ENCODE measurements at regions of chr17 and their contacts with region 1.

Region 1: GRCh38 chr17:68759343-68760132 is 158.4 kb upstream of the FAM20A start:
- DNase-seq: peak in 4 of 9 donors; percentile 10 to 39 (median 10)
- ATAC-seq: peak; percentile 85
- H3K4me3 ChIP-seq: no peak overlapping the region
- H3K4me3 Mint-ChIP-seq: peak overlapping the region in 1 of 10 donors; percentile 59
- H3K27ac ChIP-seq: no peak overlapping the region
- H3K27ac Mint-ChIP-seq: no peak overlapping the region
- H3K4me1 ChIP-seq: no peaks in the 10 kb centered on the region
- H3K4me1 Mint-ChIP-seq: peaks cover 0 to 17% (median 7%) of the 10 kb centered on the region in 7 donors
- H3K27me3 ChIP-seq: no peaks in the 10 kb centered on the region
- H3K27me3 Mint-ChIP-seq: peaks cover 0 to 14% (median 8%) of the 10 kb centered on the region in 5 donors

Region 2: DNA sequence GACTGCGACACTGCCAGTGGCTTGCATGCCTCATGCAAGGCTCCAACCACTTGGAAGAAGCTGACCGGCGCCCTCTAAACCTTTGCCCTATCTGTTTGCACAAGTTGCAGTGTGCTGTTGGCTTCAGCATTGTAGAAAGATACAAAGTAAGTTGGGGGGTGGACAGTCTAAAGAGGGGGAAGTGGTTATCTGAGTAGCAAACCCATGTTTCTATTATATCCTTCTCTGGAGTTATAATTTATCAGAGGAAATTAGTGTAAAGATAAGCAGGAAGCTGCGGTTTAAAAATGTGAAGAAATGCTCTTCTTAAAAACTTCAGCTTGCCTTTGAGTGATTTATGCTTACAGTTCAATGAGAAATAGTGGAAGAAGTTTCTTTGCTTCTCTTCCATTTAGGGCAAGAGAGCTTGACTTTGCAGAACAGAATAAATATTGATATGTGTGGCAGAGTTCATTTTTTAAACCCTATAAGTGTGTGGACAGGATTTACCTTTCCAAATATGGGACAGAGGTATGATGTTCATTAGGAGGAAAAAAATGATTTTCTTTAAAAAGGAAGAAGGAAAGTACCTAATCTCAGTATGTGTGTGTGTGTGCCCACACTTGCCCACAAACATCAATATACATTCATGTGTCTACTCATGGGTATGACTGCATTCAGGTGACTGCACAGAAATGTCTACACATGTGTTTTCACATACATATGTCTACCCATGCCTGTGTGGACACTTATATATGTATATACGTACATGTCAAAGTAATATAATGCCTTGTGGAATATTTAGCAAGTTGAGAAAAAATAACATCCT is 503.6 kb before region 1 on chr17:
- CTCF ChIA-PET with region 1: no interaction called
- POLR2A ChIA-PET with region 1: no interaction called
- intact Hi-C with region 1: loop called in 1 of 2 experiments (anchors 10 kb)
- DNase-seq: peak in 4 of 9 donors; percentile 27 to 44 (median 36)
- ATAC-seq: peak; percentile 32
- H3K4me3 ChIP-seq: peak overlapping the region; percentile 7
- H3K4me3 Mint-ChIP-seq: peak overlapping the region in 9 of 10 donors; percentile 18 to 70 (median 62)
- H3K27ac ChIP-seq: peak overlapping the region; percentile 92
- H3K27ac Mint-ChIP-seq: peak overlapping the region; percentile 77 to 97 (median 93)
- H3K4me1 ChIP-seq: peaks cover 74 to 91% of the 10 kb centered on the region in 2 donors
- H3K4me1 Mint-ChIP-seq: peaks cover 42 to 84% (median 75%) of the 10 kb centered on the region in 7 donors
- H3K27me3 ChIP-seq: no peaks in the 10 kb centered on the region
- H3K27me3 Mint-ChIP-seq: no peaks in the 10 kb centered on the region

Region 3: DNA sequence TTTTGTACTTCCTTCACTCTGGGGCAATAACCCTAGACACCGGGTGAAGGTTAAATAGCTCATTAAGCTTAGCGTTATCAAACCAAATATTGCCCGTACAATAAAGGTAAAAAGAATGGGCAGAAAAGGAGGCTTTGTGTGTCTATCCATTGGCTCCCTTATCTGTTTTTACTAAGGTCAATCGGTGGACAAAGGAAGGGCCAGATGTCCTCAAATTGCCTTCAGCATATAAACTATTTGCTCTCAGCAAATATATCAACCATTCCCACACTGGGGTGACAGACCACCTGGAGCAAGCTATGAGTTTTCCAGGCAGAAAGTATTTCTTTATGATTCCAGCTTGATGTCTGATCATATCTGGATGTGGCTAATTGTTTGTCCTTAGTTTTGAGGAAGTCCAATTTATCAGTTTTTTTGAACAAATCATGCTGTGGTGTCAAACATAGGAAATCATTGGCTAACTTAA is 276.9 kb before region 1 on chr17:
- CTCF ChIA-PET with region 1: no interaction called
- POLR2A ChIA-PET with region 1: no interaction called
- intact Hi-C with region 1: no loop called
- DNase-seq: no peak
- ATAC-seq: no peak
- H3K4me3 ChIP-seq: no peak overlapping the region
- H3K4me3 Mint-ChIP-seq: no peak overlapping the region
- H3K27ac ChIP-seq: no peak overlapping the region
- H3K27ac Mint-ChIP-seq: no peak overlapping the region
- H3K4me1 ChIP-seq: no peaks in the 10 kb centered on the region
- H3K4me1 Mint-ChIP-seq: peaks cover 4 to 12% (median 7%) of the 10 kb centered on the region in 7 donors
- H3K27me3 ChIP-seq: no peaks in the 10 kb centered on the region
- H3K27me3 Mint-ChIP-seq: peaks cover 0 to 45% (median 7%) of the 10 kb centered on the region in 5 donors

Region 4: DNA sequence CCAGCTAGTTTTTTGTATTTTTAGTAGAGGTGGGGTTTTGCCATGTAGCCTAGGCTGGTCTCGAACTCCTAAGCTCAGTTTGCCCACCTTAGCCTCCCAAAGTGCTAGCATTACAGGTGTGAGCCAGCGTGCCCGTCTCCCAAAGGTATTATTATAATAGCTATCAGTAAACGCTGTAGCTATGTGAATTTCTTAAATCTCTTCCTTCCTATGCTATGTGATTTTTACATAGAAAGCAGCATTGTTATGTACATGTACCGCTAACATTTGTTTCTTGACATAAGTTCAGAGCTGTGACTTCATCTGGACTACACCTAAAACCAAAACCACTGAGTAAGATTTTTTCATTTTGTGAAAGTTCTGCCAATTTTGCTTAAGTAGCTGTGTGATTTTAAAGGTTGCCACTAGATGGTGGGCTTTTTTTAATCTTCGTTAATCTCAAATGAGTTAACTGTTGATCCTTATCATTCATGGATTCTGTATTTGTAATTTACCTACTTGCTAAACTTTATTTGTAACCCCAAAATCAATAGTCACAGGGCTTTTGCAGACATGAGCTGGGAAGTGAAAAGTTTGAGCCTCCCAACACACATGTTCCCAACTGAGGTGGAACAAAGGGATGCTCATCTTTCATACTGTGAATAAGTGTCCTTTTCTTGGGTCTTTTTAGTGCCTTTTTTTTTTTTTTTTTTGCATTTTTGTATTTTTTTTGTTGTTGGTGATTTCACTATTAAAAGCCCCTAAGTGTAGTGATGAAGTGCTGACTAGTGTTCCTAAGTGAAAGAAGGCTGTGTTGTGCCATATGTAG is 225.4 kb before region 1 on chr17:
- CTCF ChIA-PET with region 1: no interaction called
- POLR2A ChIA-PET with region 1: no interaction called
- intact Hi-C with region 1: loop called in 1 of 2 experiments (anchors 5 kb)
- DNase-seq: no peak
- ATAC-seq: no peak
- H3K4me3 ChIP-seq: no peak overlapping the region
- H3K4me3 Mint-ChIP-seq: no peak overlapping the region
- H3K27ac ChIP-seq: no peak overlapping the region
- H3K27ac Mint-ChIP-seq: peak overlapping the region in 3 of 9 donors; percentile 1 to 73 (median 36)
- H3K4me1 ChIP-seq: no peaks in the 10 kb centered on the region
- H3K4me1 Mint-ChIP-seq: peaks cover 0 to 8% (median under 1%) of the 10 kb centered on the region in 7 donors
- H3K27me3 ChIP-seq: no peaks in the 10 kb centered on the region
- H3K27me3 Mint-ChIP-seq: no peaks in the 10 kb centered on the region

Region 5: GRCh38 chr17:68972119-68972704 is 212.7 kb after region 1 on chr17:
- CTCF ChIA-PET with region 1: no interaction called
- POLR2A ChIA-PET with region 1: no interaction called
- intact Hi-C with region 1: no loop called
- DNase-seq: no peak
- ATAC-seq: no peak
- H3K4me3 ChIP-seq: no peak overlapping the region
- H3K4me3 Mint-ChIP-seq: no peak overlapping the region
- H3K27ac ChIP-seq: no peak overlapping the region
- H3K27ac Mint-ChIP-seq: no peak overlapping the region
- H3K4me1 ChIP-seq: no peaks in the 10 kb centered on the region
- H3K4me1 Mint-ChIP-seq: peaks cover 0 to 2% (median 0%) of the 10 kb centered on the region in 7 donors
- H3K27me3 ChIP-seq: peaks cover 0 to 3% of the 10 kb centered on the region in 2 donors
- H3K27me3 Mint-ChIP-seq: peaks cover 0 to 21% (median 13%) of the 10 kb centered on the region in 5 donors

Measured in naive thymus-derived CD4-positive, alpha-beta T cell (primary cell).